ENCODE measurements at regions of chr3 and their contacts with region 1.

Region 1: DNA sequence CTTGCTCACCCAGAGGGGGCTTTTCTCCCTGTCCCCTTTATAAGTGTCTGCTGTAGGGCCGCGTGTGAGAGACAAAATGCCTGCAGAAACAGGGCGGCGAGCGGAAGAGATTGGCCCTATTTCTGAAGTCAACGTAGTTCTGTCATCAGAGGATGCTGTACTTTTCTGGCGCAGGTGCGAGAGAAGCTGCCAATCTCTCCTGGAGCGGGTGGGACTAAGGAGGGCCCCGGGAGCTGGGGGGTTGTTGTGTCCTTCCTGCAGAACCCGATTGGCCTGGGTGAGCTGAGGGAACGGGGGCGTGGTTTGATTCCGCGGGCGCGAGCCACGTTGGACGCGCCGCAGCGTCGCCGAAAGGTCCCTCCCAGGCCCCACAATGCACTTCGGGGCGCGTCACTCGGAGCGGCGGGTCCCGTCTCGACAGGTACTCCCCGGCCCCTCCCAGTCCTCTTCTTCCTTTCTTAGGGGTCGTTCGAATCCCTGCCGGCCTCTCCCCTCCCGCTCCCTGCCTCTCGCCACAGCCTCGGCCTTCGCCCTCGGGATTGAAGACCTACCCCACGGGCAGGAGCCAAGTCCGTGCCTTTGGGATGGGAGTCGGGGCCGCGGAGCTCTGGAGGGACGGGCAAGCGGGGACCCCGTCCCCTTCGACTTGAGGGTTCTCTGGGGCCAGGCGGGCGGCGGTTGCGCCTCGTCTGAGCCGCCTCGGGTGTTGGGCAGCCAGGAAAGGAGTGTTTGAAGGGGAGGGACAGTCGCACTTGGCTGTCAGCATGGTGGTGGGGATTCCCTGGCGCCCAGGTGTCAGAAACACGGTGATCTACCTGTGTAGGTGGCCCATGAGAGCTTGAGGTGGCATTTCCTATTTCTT is at the start of gene SEC22A:
- DNase-seq: peak; percentile 94

Region 2: DNA sequence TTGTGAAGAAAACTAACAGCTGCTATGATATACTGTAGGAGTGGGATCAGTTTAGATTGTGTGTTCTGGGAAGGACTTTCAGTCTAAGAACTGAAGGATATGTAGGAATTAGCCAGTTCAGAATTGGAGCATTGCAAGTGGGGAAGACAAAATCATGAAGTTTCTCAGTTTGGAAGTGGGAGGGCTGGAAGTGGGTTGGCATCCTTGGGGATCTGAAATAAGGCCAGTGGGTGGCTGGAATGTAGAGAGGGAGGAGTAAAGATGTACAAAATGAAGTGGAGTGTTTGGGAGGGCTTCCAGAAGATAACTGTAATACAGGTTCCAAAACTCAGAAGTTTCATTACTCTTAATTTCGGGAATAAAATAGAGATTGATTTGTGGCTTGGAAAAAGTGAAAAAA is 17.2 kb after region 1 on chr3:
- CTCF ChIA-PET with region 1: no interaction called
- POLR2A ChIA-PET with region 1: interaction called, 14 read pairs
- DNase-seq: no peak